A673 (cell line): ENCODE measurements at regions of chr2 and their contacts with region 1.

Region 1: DNA sequence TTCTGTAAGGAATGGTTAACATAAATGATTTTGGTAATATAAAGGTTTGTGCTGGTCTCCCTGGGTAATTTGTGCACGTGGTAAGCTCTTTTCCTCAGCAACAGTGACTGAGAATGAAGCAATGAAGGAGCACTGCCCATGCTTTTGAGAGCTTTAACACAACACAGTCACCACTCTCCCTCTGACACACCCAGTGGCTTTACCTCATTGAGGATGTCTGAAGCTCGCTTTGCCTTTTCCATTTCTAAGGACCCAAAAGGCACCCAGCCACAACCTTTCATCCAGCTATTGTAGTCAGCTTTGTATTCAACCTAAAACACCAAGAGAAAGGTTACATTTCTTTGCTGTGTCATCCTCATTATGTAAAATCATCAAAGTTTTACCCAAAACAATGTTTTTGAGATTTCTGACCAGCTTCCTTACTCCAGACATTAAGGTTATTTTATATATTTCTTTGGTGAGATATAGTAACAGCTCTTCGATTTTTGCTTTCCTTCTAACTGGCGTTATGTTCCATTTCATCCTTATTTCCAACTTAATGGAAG is 51.7 kb downstream of the NEB start:
- DNase-seq: no peak
- H3K4me3 ChIP-seq: no peak overlapping the region
- H3K27ac ChIP-seq: no peak overlapping the region
- H3K4me1 ChIP-seq: no peaks in the 10 kb centered on the region
- H3K27me3 ChIP-seq: no peaks in the 10 kb centered on the region
- CTCF ChIP-seq: no peak

Region 2: GRCh38 chr2:151999053-151999452 is 316.5 kb after region 1 on chr2:
- CTCF ChIA-PET with region 1: no interaction called
- POLR2A ChIA-PET with region 1: interaction called, 11 read pairs
- intact Hi-C with region 1: no loop called
- DNase-seq: peak; percentile 74
- H3K4me3 ChIP-seq: no peak overlapping the region
- H3K27ac ChIP-seq: no peak overlapping the region
- H3K4me1 ChIP-seq: no peaks in the 10 kb centered on the region
- H3K27me3 ChIP-seq: peaks cover 3% of the 10 kb centered on the region
- CTCF ChIP-seq: peak; percentile 88